ENCODE measurements at regions of chr9 and their contacts with region 1.

Region 1: GRCh38 chr9:6068983-6069382 is 53.6 kb upstream of the RANBP6 start:
- DNase-seq: peak in 7 of 9 donors; percentile 30 to 73 (median 63)
- ATAC-seq: peak; percentile 97
- H3K4me3 ChIP-seq: peak overlapping the region; percentile 16
- H3K4me3 Mint-ChIP-seq: peak overlapping the region; percentile 54 to 77 (median 72)
- H3K27ac ChIP-seq: peak overlapping the region; percentile 48
- H3K27ac Mint-ChIP-seq: peak overlapping the region; percentile 86 to 96 (median 93)
- H3K4me1 ChIP-seq: peaks cover 8 to 21% of the 10 kb centered on the region in 2 donors
- H3K4me1 Mint-ChIP-seq: peaks cover 17 to 28% (median 27%) of the 10 kb centered on the region in 7 donors
- H3K27me3 ChIP-seq: no peaks in the 10 kb centered on the region
- H3K27me3 Mint-ChIP-seq: no peaks in the 10 kb centered on the region

Region 2: GRCh38 chr9:6015278-6016157 is 53.5 kb before region 1 on chr9 and contains the start of gene RANBP6:
- CTCF ChIA-PET with region 1: no interaction called
- POLR2A ChIA-PET with region 1: interaction called, 3 read pairs
- intact Hi-C with region 1: loop called (anchors 2 kb)
- DNase-seq: peak; percentile 81 to 92 (median 91)
- ATAC-seq: peak; percentile 100
- H3K4me3 ChIP-seq: peak within 1 kb of the TSS; percentile 65
- H3K4me3 Mint-ChIP-seq: peak within 1 kb of the TSS; percentile 91 to 99 (median 96)
- H3K27ac ChIP-seq: peak within 1 kb of the TSS; percentile 75
- H3K27ac Mint-ChIP-seq: peak within 1 kb of the TSS; percentile 91 to 100 (median 99)
- H3K4me1 ChIP-seq: peaks cover 8 to 11% of the 10 kb centered on the region in 2 donors
- H3K4me1 Mint-ChIP-seq: peaks cover 13 to 49% (median 38%) of the 10 kb centered on the region in 7 donors
- H3K27me3 ChIP-seq: no peaks in the 10 kb centered on the region
- H3K27me3 Mint-ChIP-seq: no peaks in the 10 kb centered on the region
- total RNA-seq, gene RANBP6: 21.9 to 34.3 (median 30.3) TPM

Region 3: GRCh38 chr9:6024020-6024554 is 44.9 kb before region 1 on chr9:
- CTCF ChIA-PET with region 1: no interaction called
- POLR2A ChIA-PET with region 1: no interaction called
- intact Hi-C with region 1: loop called in 1 of 2 experiments (anchors 1 kb)
- DNase-seq: peak in 6 of 9 donors; percentile 12 to 38 (median 18)
- ATAC-seq: peak; percentile 78
- H3K4me3 ChIP-seq: no peak overlapping the region
- H3K4me3 Mint-ChIP-seq: peak overlapping the region in 2 of 10 donors; percentile 30 to 31
- H3K27ac ChIP-seq: no peak overlapping the region
- H3K27ac Mint-ChIP-seq: peak overlapping the region in 1 of 9 donors; percentile 78
- H3K4me1 ChIP-seq: no peaks in the 10 kb centered on the region
- H3K4me1 Mint-ChIP-seq: peaks cover 0 to 6% (median 3%) of the 10 kb centered on the region in 7 donors
- H3K27me3 ChIP-seq: no peaks in the 10 kb centered on the region
- H3K27me3 Mint-ChIP-seq: peaks cover 4 to 24% (median 9%) of the 10 kb centered on the region in 5 donors

Region 4: GRCh38 chr9:6080154-6080716 is 11.3 kb after region 1 on chr9:
- CTCF ChIA-PET with region 1: no interaction called
- POLR2A ChIA-PET with region 1: interaction called, 4 read pairs
- intact Hi-C with region 1: loop called in 1 of 2 experiments (anchors 1 kb)
- DNase-seq: peak; percentile 13 to 53 (median 42)
- ATAC-seq: peak; percentile 90
- H3K4me3 ChIP-seq: peak overlapping the region; percentile 38
- H3K4me3 Mint-ChIP-seq: peak overlapping the region; percentile 79 to 95 (median 92)
- H3K27ac ChIP-seq: peak overlapping the region; percentile 51
- H3K27ac Mint-ChIP-seq: peak overlapping the region; percentile 60 to 93 (median 86)
- H3K4me1 ChIP-seq: peaks cover 0 to 4% of the 10 kb centered on the region in 2 donors
- H3K4me1 Mint-ChIP-seq: peaks cover 0 to 13% (median 7%) of the 10 kb centered on the region in 7 donors
- H3K27me3 ChIP-seq: no peaks in the 10 kb centered on the region
- H3K27me3 Mint-ChIP-seq: peaks cover 0 to 10% (median 5%) of the 10 kb centered on the region in 5 donors